Heart left ventricle (tissue), 16 donors: ENCODE measurements at regions of chr10 and their contacts with region 1.

Region 1: DNA sequence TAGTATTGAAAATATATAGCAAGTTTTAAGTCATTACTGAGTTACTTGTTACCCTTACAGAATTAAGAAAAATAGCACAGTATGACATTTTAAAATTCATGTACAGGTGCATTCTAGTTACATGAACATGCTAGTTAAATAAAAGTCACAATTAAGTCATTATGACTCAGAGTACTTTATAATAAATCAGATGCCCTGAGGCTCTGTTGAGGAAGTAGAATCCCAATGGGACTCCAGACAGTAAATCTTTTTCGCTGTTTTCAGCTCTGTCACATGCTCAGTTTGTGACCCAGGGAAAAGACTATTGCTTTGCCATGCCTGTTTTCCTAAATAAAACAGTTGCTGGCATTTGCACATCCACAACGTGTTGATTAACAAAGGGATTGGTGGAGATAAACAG is 21.0 kb downstream of the NUDT13 start:
- DNase-seq: no peak
- ATAC-seq: no peak
- H3K4me3 ChIP-seq: no peak overlapping the region
- H3K27ac ChIP-seq: no peak overlapping the region
- H3K4me1 ChIP-seq: no peaks in the 10 kb centered on the region
- H3K27me3 ChIP-seq: no peaks in the 10 kb centered on the region
- CTCF ChIP-seq: no peak
- POLR2A ChIP-seq: no peak

Region 2: GRCh38 chr10:73054286-73054685 is 77.0 kb before region 1 on chr10:
- intact Hi-C with region 1: loop called in 1 of 10 experiments (anchors 5 kb)
- DNase-seq: no peak
- ATAC-seq: peak in 1 of 4 donors; percentile 58
- H3K4me3 ChIP-seq: no peak overlapping the region
- H3K27ac ChIP-seq: peak overlapping the region in 1 of 12 donors; percentile 56
- H3K4me1 ChIP-seq: peaks cover 0 to 13% (median 0%) of the 10 kb centered on the region in 12 donors
- H3K27me3 ChIP-seq: no peaks in the 10 kb centered on the region
- CTCF ChIP-seq: no peak
- POLR2A ChIP-seq: no peak